Gastrocnemius medialis (tissue), 4 donors: ENCODE measurements at regions of chr13 and their contacts with region 1.

Region 1: DNA sequence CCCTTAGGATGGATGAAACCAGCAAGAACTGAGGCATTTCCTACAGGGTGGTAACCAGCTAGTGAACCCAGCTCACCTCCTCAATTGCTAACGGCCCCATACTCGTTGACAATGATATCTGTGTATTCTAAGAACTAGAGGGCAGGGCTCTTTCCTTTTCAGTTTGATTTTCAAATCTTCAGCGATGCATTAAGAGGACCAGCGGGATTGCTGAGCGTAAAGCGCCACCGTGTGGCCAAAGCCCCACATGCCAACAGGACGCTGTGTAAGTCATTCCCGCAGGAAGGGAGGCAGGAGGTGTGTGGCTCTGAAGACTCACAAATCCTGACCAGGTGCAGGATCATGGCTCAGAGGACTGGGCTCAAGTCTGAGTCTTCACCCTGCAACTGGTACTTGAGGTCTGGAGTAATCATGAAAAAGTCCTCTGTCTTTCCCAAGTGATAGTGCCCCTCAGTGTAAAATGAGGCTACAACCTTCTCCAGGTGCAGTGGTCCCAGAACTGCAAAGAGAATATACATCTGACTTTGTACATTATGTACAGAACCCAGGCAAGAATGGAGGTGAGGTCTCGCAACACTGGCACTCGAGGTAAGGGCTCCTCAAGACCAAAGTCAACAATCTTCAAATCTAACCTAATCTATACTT is 40.9 kb downstream of the C13orf42 start:
- DNase-seq: peak; percentile 32 to 51
- ATAC-seq: peak; percentile 60 to 79
- H3K4me3 ChIP-seq: no peak overlapping the region
- H3K27ac ChIP-seq: no peak overlapping the region
- H3K4me1 ChIP-seq: no peaks in the 10 kb centered on the region
- H3K27me3 ChIP-seq: no peaks in the 10 kb centered on the region
- CTCF ChIP-seq: peak; percentile 56 to 90 (median 78)
- POLR2A ChIP-seq: no peak

Region 2: GRCh38 chr13:50594276-50595051 is 475.7 kb before region 1 on chr13:
- in situ Hi-C with region 1: no loop called
- intact Hi-C with region 1: no loop called
- DNase-seq: no peak
- ATAC-seq: no peak
- H3K4me3 ChIP-seq: no peak overlapping the region
- H3K27ac ChIP-seq: peak overlapping the region in 1 of 4 donors; percentile 33
- H3K4me1 ChIP-seq: peaks cover 11 to 24% of the 10 kb centered on the region in 2 donors
- H3K27me3 ChIP-seq: no peaks in the 10 kb centered on the region
- CTCF ChIP-seq: no peak
- POLR2A ChIP-seq: no peak

Region 3: DNA sequence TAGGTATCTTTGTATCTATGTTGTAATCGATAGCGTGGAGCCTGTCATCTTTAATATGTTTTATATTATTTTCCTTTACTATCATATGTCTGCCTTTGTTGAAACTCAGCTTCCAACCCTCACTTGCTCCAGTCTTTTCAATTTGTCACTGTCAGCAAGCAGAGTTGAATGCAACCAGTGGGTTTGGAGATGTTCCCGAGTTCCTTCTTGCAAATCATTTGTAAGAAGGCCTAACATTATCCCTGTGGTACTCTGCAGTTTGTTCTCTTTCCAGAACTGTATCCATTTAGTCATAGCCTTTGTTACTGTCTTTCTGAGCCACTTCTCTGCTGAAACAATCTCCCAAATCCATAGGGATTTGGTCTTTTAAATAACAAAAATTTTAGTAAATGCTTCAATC is 118.8 kb before region 1 on chr13:
- in situ Hi-C with region 1: no loop called
- intact Hi-C with region 1: loop called (anchors 10 kb)
- DNase-seq: no peak
- ATAC-seq: no peak
- H3K4me3 ChIP-seq: no peak overlapping the region
- H3K27ac ChIP-seq: no peak overlapping the region
- H3K4me1 ChIP-seq: no peaks in the 10 kb centered on the region
- H3K27me3 ChIP-seq: no peaks in the 10 kb centered on the region
- CTCF ChIP-seq: no peak
- POLR2A ChIP-seq: no peak

Region 4: GRCh38 chr13:50991579-50992521 is 78.3 kb before region 1 on chr13:
- in situ Hi-C with region 1: loop called in 1 of 4 experiments (anchors 10 kb)
- intact Hi-C with region 1: loop called (anchors 1 kb)
- DNase-seq: no peak
- ATAC-seq: no peak
- H3K4me3 ChIP-seq: no peak overlapping the region
- H3K27ac ChIP-seq: peak overlapping the region in 2 of 4 donors; percentile 14 to 28
- H3K4me1 ChIP-seq: peaks cover 3 to 26% of the 10 kb centered on the region in 2 donors
- H3K27me3 ChIP-seq: peaks cover 0 to 3% (median 0%) of the 10 kb centered on the region in 3 donors
- CTCF ChIP-seq: no peak
- POLR2A ChIP-seq: no peak